IMR-90 (cell line): ENCODE measurements at regions of chr17 and their contacts with region 1.

Region 1: GRCh38 chr17:7021993-7022778 is 664 bp upstream of the BCL6B start:
- DNase-seq: peak; percentile 36
- ATAC-seq: peak; percentile 89
- H3K4me3 ChIP-seq: no peak overlapping the region
- H3K27ac ChIP-seq: no peak overlapping the region
- H3K4me1 ChIP-seq: peaks cover 4% of the 10 kb centered on the region; the same call in 1 of the 2 replicates
- H3K27me3 ChIP-seq: peaks cover 10% of the 10 kb centered on the region; the same call in 1 of the 2 replicates
- CTCF ChIP-seq: peak; percentile 87
- POLR2A ChIP-seq: 0 out of 2 replicates have a peak, but pooled peaks have one; percentile 39
- RAD21 ChIP-seq: peak; percentile 80

Region 2: GRCh38 chr17:6591599-6592158 is 430.5 kb before region 1 on chr17:
- CTCF ChIA-PET with region 1: no interaction called
- POLR2A ChIA-PET with region 1: interaction called, 12 read pairs
- dilution Hi-C with region 1: no loop called
- in situ Hi-C with region 1: no loop called
- intact Hi-C with region 1: no loop called
- DNase-seq: peak; percentile 94
- ATAC-seq: peak; percentile 92
- H3K4me3 ChIP-seq: no peak overlapping the region
- H3K27ac ChIP-seq: peak overlapping the region; percentile 12; the same call in 1 of the 2 replicates
- H3K4me1 ChIP-seq: peaks cover 6% of the 10 kb centered on the region
- H3K27me3 ChIP-seq: no peaks in the 10 kb centered on the region
- CTCF ChIP-seq: no peak
- POLR2A ChIP-seq: no peak
- RAD21 ChIP-seq: 0 out of 2 replicates have a peak, but pooled peaks have one; percentile 3

Region 3: GRCh38 chr17:6800422-6801027 is 221.7 kb before region 1 on chr17:
- CTCF ChIA-PET with region 1: no interaction called
- POLR2A ChIA-PET with region 1: no interaction called
- dilution Hi-C with region 1: no loop called
- in situ Hi-C with region 1: no loop called
- intact Hi-C with region 1: no loop called
- DNase-seq: peak; percentile 4
- ATAC-seq: 0 out of 2 replicates have a peak, but pooled peaks have one; percentile 29
- H3K4me3 ChIP-seq: no peak overlapping the region
- H3K27ac ChIP-seq: no peak overlapping the region
- H3K4me1 ChIP-seq: no peaks in the 10 kb centered on the region
- H3K27me3 ChIP-seq: peaks cover 8% of the 10 kb centered on the region
- CTCF ChIP-seq: peak; percentile 56
- POLR2A ChIP-seq: no peak
- RAD21 ChIP-seq: peak; percentile 67

Region 4: DNA sequence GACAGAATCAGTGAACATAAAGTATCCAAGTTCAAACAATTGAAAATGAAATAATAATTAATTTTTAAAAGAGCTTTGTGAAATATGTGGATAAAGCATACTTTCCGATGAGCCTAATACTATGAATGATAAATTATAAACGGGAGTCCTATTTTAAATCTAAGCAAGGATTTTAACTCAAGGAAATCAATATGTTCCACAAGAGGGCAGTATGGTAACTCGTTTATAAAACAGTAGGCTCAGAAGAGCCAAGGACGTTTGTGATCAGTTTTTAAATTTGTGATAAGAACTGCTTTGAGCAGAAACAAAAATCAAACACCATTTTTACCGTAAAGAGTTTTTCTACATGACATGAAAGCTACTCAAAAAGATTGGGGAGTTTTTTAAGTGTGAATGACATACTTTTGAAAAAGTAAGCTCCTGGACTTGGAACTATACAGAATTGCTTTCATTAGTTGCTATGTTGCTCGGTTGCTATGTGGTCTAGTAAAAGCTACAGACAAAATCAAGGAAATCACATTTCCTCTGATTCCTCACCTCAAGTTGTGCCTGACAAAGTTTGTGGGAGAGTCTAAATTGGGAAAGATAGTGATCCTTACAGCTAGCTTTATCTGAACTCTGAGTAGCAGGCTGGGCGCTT is 178.8 kb before region 1 on chr17:
- CTCF ChIA-PET with region 1: interaction called, 3 read pairs
- POLR2A ChIA-PET with region 1: no interaction called
- dilution Hi-C with region 1: no loop called
- in situ Hi-C with region 1: no loop called
- intact Hi-C with region 1: loop called (anchors 5 kb)
- DNase-seq: peak; percentile 52
- ATAC-seq: peak; percentile 67
- H3K4me3 ChIP-seq: no peak overlapping the region
- H3K27ac ChIP-seq: no peak overlapping the region
- H3K4me1 ChIP-seq: no peaks in the 10 kb centered on the region
- H3K27me3 ChIP-seq: peaks cover 9% of the 10 kb centered on the region
- CTCF ChIP-seq: peak; percentile 50
- POLR2A ChIP-seq: no peak
- RAD21 ChIP-seq: peak; percentile 43

Region 5: DNA sequence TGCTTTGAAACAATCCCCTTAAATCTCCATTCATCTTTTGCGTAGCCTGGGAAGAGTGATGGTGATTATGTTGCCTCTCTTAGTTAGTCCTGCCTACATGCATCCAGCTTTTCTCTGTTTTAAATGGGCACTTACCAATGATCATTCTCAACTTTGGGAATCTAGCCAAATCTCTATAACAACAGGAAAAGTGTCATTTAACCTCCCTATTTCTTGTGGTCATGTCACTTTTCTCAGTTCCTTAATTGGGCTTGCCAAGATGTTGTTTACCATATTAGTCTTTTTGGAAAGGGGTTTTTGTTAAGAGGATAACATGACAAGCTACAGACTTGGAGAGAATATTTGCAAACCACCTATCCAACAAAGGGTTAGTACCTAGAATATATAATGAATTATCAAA is 73.4 kb after region 1 on chr17:
- CTCF ChIA-PET with region 1: no interaction called
- POLR2A ChIA-PET with region 1: no interaction called
- dilution Hi-C with region 1: no loop called
- in situ Hi-C with region 1: no loop called
- intact Hi-C with region 1: no loop called
- DNase-seq: no peak
- ATAC-seq: no peak
- H3K4me3 ChIP-seq: no peak overlapping the region
- H3K27ac ChIP-seq: no peak overlapping the region
- H3K4me1 ChIP-seq: no peaks in the 10 kb centered on the region
- H3K27me3 ChIP-seq: peaks cover 16% of the 10 kb centered on the region
- CTCF ChIP-seq: no peak
- POLR2A ChIP-seq: no peak
- RAD21 ChIP-seq: no peak